Mammary epithelial cell (primary cell): ENCODE measurements at regions of chr6 and their contacts with region 1.

Region 1: GRCh38 chr6:13427801-13428582 is 59.4 kb downstream of the GFOD1 start:
- DNase-seq: no peak
- H3K4me3 ChIP-seq: no peak overlapping the region
- H3K27ac ChIP-seq: no peak overlapping the region
- H3K4me1 ChIP-seq: peaks cover 6% of the 10 kb centered on the region
- H3K27me3 ChIP-seq: no peaks in the 10 kb centered on the region
- CTCF ChIP-seq: no peak

Region 2: DNA sequence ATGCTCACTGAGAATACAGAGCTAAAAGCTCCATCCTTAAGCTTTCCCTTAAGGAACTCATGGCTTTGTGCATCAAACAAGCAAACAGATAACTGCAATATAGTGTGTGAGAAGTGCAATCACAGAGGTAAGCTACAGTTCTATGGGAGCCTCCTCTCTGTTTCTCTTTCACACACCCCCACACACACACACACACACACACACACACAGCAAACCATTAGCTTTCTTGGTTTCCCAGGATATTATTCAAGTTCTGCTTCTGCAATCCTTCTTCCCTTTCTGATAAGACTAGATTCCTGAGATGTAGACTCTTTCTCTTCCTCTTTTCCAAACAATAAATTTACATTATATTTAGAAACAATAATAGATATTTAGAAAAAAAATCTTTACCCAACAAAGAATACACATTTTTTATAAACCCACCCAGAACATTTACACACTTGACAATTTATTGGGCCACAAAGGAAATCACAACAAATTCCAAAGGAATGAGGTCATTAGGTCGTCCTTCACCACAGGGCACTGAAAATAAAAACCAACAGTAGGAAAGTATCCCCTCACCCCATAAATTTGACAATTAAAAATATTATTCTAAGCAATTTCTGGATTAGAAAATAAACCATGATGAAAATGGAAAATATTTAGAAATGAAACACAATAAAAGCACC is 68.7 kb after region 1 on chr6:
- CTCF ChIA-PET with region 1: no interaction called
- dilution Hi-C with region 1: loop called (anchors 5 kb)
- in situ Hi-C with region 1: no loop called
- intact Hi-C with region 1: no loop called
- DNase-seq: no peak
- H3K4me3 ChIP-seq: no peak overlapping the region
- H3K27ac ChIP-seq: no peak overlapping the region
- H3K4me1 ChIP-seq: no peaks in the 10 kb centered on the region
- H3K27me3 ChIP-seq: no peaks in the 10 kb centered on the region
- CTCF ChIP-seq: no peak